ENCODE measurements at regions of chr16 and their contacts with region 1.

Region 1: DNA sequence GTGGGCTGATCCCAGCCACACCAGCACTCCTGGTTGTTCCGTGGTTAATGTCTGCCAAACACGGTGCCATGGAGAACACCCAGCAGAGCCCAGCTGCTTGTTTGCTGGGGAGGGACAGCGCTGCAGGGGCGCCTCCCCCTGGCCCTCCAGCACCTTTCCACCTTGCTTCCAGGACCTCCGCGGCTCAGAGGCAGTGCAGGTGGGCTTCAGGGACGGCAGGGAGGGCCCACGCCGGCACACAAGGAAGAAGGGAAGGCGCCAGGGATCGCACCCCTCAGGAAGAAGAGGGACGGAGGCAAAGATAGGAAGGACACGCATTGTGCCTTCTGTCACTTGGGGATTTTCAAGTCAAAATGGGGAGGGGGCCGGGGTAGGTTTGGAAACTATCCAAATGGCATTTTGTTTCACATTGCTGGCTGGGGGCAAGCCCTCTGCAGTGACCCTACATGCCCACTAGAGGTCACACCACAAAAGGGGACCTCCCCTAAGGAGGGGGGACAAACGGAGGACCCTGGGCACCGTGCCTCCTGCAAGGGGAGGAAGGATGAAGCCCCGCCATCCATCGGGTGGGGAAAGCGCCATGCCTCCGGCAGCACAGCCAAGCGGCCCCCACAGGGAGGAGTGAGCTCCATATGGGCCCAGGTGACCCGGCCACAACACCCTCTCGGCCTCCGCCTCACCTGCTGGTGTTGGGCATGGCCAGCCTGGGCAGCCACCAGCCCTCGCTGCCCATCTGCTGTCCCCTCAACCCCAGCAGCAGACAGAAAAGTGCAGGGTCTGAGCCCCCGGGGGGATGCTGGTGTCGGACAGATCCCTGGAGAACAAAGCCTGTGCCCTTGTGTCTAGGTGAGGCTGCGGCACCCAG is 7.5 kb upstream of the C16orf95 start:
- DNase-seq: peak in 1 of 2 donors; percentile 74
- ATAC-seq: peak; percentile 56 to 79 (median 67)
- H3K4me3 ChIP-seq: no peak overlapping the region
- H3K27ac ChIP-seq: peak overlapping the region; percentile 54
- H3K4me1 ChIP-seq: peaks cover 21% of the 10 kb centered on the region
- H3K27me3 ChIP-seq: no peaks in the 10 kb centered on the region
- CTCF ChIP-seq: peak; percentile 74

Region 2: GRCh38 chr16:86931399-86931941 is 393.2 kb before region 1 on chr16:
- intact Hi-C with region 1: no loop called
- DNase-seq: peak in 1 of 2 donors; percentile 34
- ATAC-seq: no peak
- H3K4me3 ChIP-seq: no peak overlapping the region
- H3K27ac ChIP-seq: no peak overlapping the region
- H3K4me1 ChIP-seq: peaks cover 4% of the 10 kb centered on the region
- H3K27me3 ChIP-seq: peaks cover 0 to 88% (median 14%) of the 10 kb centered on the region in 3 donors
- CTCF ChIP-seq: no peak

Region 3: DNA sequence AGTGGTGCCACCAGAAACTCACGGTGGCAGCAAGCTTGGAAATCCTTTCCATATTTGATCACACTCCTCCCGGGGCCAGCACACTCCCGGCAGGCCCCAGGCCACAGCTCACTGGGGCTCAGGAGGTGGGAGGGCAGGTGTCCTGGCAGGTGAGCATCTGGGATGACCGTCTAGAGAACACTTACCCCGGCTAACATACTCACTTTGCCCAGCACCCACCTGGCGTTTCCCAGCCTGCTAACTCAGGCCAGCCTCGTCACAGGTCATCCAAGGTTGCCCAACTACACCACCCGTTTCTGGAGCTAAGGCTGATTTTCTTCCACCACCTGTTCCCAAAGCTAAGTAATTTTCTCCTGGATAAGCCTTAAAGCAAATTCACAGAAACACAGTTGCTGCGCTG is 34.1 kb after region 1 on chr16:
- intact Hi-C with region 1: no loop called
- DNase-seq: peak in 1 of 2 donors; percentile 62
- ATAC-seq: peak; percentile 54 to 76 (median 70)
- H3K4me3 ChIP-seq: no peak overlapping the region
- H3K27ac ChIP-seq: peak overlapping the region; percentile 77
- H3K4me1 ChIP-seq: peaks cover 53% of the 10 kb centered on the region
- H3K27me3 ChIP-seq: no peaks in the 10 kb centered on the region
- CTCF ChIP-seq: no peak

Region 4: DNA sequence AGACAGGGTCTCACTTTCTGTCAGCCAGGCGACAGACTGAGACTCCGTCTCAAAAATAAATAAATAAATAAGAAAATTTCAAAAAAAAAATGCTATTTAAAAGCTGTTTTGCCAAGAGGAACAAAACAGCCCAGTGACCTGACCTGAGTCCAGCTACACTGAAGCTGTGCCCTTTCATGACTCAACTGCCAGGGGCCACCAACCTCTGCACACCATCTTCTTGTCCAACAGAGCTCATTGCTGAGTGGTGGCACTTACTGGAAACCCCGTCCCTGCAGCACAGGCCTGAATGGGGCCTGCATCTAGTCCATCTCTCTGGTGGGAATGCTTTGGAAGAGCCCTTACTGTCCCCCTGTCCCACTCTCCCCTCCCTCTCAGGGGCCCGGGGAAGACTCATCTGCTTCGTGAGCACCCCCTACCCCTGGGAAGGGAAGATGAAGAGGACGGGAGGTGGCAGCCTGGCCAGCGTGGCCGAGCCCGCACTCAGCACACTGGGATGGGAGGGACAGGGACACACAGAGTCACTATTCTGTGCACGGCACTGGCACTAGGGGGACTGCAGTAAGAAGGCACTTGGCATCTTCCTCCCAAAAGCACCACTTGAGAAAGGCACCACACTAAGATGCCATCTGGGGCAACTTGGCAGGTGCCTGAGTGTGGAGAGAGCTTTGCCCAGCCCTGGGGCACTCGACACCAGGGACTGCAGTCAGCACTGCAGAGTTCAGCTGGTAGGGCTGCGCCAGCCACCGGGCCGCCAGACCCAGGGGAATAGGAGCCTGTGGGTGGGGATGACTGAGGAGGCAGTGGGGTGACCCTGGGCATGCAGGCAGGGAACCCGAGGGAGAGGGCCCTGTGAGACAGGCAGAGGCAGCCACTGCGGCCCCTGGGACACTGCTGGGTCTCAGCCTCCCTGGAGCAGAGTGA is 45.4 kb after region 1 on chr16:
- intact Hi-C with region 1: loop called in 1 of 2 experiments (anchors 5 kb)
- DNase-seq: peak in 1 of 2 donors; percentile 80
- ATAC-seq: peak; percentile 77 to 88 (median 83)
- H3K4me3 ChIP-seq: no peak overlapping the region
- H3K27ac ChIP-seq: peak overlapping the region; percentile 81
- H3K4me1 ChIP-seq: peaks cover 50% of the 10 kb centered on the region
- H3K27me3 ChIP-seq: no peaks in the 10 kb centered on the region
- CTCF ChIP-seq: no peak

Region 5: GRCh38 chr16:87383629-87384161 is 59.1 kb after region 1 on chr16 and contains the start of gene FBXO31:
- intact Hi-C with region 1: loop called (anchors 2 kb)
- DNase-seq: peak; percentile 85 to 92
- ATAC-seq: peak; percentile 77 to 82 (median 78)
- H3K4me3 ChIP-seq: peak within 1 kb of the TSS; percentile 77
- H3K27ac ChIP-seq: peak within 1 kb of the TSS; percentile 99
- H3K4me1 ChIP-seq: peaks cover 49% of the 10 kb centered on the region
- H3K27me3 ChIP-seq: no peaks in the 10 kb centered on the region
- CTCF ChIP-seq: no peak
- total RNA-seq, gene FBXO31: 88.1 to 103 (median 98.5) TPM

Region 6: DNA sequence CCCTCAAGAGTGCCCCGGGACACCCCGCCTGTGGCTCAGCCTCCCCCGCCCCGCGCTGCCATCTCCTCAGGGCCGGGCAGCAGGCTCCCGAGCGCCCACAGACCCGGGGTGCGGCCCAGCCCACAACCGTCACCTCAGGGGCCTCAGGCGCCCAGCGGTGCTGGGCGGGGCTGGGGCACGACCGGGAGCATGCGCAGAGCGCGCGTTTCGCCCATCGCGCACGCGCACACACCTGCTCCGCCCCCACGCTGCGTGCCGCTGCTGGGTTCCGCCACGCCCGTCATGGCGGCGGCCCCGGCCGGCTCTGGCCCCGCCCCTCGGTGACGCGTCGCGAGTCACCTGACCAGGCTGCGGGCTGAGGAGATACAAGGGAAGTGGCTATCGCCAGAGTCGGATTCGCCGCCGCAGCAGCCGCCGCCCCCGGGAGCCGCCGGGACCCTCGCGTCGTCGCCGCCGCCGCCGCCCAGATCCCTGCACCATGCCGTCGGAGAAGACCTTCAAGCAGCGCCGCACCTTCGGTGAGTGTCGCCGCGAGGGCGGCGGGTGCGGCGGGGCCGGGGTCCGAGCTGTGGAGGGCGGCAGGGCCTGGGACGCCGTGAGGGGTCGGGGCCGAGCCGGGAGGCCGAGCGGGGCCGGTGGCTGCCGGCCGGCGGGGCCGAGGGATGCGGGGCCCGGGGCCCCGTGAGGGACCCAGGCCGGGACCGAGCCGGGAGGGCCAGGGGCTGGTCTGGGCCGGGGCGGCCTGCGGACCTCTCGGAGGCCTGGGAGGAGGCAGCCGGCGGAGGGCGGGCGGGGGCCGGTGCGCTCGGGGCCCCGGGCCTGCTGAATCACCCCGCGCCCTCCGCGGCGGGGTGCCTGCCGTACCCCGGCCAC is 67.5 kb after region 1 on chr16 and contains the start of gene MAP1LC3B:
- intact Hi-C with region 1: loop called (anchors 2 to 5 kb)
- DNase-seq: peak; percentile 96 to 98
- ATAC-seq: peak; percentile 83 to 89 (median 84)
- H3K4me3 ChIP-seq: peak within 1 kb of the TSS; percentile 79
- H3K27ac ChIP-seq: peak within 1 kb of the TSS; percentile 99
- H3K4me1 ChIP-seq: peaks cover 49% of the 10 kb centered on the region
- H3K27me3 ChIP-seq: no peaks in the 10 kb centered on the region
- CTCF ChIP-seq: no peak
- total RNA-seq, gene MAP1LC3B: 117 to 189 (median 142) TPM

Measured in psoas muscle (tissue), 8 donors.